GM18951 (cell line): ENCODE measurements at regions of chr14 and their contacts with region 1.

Region 1: GRCh38 chr14:94548999-94549985 is 11.9 kb upstream of the SERPINA4 start:
- POLR2A ChIP-seq: no peak

Region 2: GRCh38 chr14:94439453-94440057 is 109.7 kb before region 1 on chr14:
- in situ Hi-C with region 1: loop called (anchors 10 kb)
- POLR2A ChIP-seq: no peak